GM13977 (cell line): ENCODE measurements at regions of chr9 and their contacts with region 1.

Region 1: DNA sequence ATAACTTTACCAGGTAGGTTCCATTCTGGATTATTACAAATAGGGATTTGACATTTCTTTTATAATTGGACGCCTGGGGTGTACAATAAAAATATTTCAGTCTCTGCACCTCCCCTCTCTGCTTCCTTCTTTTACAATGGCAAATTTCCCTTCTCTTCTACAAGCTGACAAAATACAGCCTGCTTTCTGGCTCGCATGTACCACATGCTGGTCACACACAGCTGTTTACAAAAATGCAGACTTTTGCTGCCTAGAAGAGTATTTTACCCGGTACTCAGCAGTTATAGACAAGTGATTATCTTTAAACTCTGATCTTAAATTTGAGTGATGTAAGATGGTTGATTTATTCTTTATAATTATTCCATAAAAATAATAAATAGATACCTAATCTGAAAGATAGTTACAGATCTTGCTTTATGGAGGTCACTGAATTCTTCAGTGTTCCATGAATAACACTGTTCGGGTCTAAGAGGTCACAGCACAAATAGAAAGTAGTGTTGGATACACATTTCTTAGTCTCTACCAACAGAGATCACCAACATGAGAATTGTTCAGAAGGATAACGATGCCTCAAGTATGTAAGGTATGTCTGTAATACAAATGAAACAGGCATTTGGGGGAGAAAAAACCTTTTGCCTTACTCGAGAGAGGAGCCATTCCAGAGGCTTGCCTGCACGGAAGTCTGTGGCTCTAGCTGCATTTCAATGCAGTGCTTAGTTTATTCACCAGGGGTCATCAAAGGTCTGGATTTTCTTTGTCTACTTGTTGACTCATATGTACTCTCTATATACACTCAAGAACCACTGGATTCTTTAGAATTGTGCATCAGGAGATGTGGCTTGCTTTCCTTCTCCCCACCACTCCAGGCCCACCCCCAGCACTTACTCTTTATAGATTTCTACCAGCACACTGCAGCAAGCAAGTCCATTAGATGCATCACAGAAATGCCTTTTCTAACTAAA is 206.6 kb upstream of the RFX3 start:
- DNase-seq: peak; percentile 72
- CTCF ChIP-seq: peak; percentile 79

Region 2: GRCh38 chr9:3099646-3100045 is 632.7 kb before region 1 on chr9:
- in situ Hi-C with region 1: no loop called
- DNase-seq: no peak
- CTCF ChIP-seq: no peak

Region 3: GRCh38 chr9:3410461-3410860 is 321.9 kb before region 1 on chr9:
- in situ Hi-C with region 1: no loop called
- DNase-seq: no peak
- CTCF ChIP-seq: no peak

Region 4: DNA sequence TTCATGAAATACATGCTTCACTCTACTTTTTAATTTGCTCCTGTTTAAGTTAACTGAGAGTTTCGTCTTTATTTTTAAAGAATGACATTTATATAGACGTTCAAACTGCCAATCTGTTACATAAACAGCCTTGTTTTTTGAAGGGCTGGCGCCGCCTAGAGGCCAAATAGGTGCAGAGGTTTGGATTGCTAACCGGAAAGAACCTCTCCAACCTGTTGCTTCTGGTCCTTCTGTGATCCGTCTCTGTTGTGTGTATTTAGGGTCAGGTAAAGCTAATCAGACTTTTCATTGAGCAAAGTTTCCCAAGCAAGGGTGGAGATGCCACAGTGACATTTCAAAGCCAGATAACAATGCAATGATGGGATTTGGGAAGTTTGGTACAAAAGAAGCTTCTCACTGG is 607.0 kb after region 1 on chr9:
- in situ Hi-C with region 1: loop called (anchors 25 kb)
- DNase-seq: peak; percentile 84
- CTCF ChIP-seq: peak; percentile 87